ENCODE measurements at regions of chr4 and their contacts with region 1.

Region 1: DNA sequence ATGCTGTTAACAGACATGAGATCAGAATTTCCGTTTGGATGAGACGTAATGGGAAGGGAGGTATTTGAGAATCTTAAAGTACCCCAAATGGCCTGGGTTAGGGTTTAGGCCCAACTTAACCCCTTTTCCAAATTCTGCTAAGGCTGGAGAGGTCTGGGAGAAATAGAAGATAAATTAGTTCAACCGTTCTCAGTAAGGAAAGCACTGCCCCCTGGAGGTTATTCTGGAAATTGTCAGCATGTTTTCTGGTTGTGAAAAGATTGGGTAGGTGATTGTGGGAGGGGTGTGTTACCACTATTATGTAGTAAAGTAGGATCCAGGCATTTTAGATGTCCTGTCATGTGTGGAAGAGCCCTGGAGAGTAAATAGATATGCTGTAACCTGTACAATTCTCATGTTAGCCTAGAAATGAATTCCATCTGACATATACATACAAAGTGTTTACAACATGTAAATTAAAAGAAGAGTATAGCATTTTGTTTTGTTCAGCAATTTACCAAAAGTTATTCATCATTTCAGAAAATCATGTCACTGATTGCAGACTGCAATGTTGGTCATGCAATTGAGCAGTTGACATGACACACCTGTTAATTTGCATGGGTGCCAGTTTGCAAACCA is 26.8 kb upstream of the GRXCR1 start:
- DNase-seq: peak; percentile 77
- H3K4me3 Mint-ChIP-seq: no peak overlapping the region
- H3K27ac Mint-ChIP-seq: no peak overlapping the region
- H3K4me1 Mint-ChIP-seq: no peaks in the 10 kb centered on the region
- H3K27me3 Mint-ChIP-seq: peaks cover 14% of the 10 kb centered on the region
- CTCF ChIP-seq: peak; percentile 44

Region 2: DNA sequence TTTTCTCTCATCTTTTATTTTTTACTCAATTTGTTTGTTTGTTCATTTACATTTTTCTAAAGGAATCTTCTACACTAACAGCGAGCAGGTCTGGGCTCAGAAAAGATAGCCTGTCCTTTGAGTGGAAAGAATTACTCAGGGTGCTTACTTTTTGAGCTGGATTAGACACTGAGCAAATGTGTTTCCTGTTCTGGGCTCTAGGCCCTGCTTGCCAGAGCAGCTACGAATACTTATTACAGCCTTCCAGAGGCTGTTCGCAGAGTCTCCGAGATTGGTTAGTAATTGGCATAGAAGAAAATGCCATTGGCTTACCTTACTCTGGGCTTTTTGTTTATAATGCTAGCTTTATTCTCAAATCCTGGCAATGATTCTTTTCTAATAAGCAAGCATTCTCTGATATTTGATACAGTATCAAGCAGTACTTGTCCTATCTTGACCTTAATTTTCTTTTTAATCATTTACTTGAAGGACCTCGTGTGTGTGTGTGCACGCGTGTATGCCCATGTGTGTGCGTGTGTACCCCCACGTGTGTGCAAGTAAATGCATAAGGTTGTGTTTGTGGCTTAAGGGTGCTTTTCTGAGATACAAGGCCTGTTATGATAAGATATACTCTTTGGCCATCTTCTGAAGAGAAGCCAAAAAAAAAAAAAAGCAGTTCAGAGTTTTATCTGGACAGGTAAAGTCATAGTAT is 49.3 kb before region 1 on chr4:
- CTCF ChIA-PET with region 1: interaction called, 16 read pairs
- POLR2A ChIA-PET with region 1: no interaction called
- intact Hi-C with region 1: no loop called
- DNase-seq: no peak
- H3K4me3 Mint-ChIP-seq: no peak overlapping the region
- H3K27ac Mint-ChIP-seq: no peak overlapping the region
- H3K4me1 Mint-ChIP-seq: peaks cover 13% of the 10 kb centered on the region
- H3K27me3 Mint-ChIP-seq: no peaks in the 10 kb centered on the region
- CTCF ChIP-seq: no peak

Region 3: DNA sequence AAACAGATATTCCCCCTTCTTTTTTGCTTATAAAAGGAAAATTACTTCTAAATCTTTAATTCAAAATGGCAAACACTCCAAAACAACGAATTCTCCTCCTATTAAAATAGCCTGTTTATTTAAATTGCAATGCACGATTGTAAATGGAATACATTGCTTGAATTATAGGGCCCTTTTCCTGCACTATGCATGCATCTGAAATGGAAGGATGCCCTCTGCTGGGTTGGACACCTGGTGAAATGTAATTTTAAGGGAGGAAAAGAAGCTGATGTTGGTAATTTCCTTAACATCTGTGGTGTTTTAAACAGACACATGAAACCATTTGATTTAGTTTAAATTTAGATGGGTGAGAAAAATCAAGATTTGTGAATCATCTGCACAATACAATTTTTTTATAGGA is 99.6 kb after region 1 on chr4:
- CTCF ChIA-PET with region 1: interaction called, 14 read pairs
- POLR2A ChIA-PET with region 1: no interaction called
- intact Hi-C with region 1: loop called (anchors 1 kb)
- DNase-seq: peak; percentile 50
- H3K4me3 Mint-ChIP-seq: no peak overlapping the region
- H3K27ac Mint-ChIP-seq: peak overlapping the region; percentile 69
- H3K4me1 Mint-ChIP-seq: peaks cover 11% of the 10 kb centered on the region
- H3K27me3 Mint-ChIP-seq: no peaks in the 10 kb centered on the region
- CTCF ChIP-seq: peak; percentile 33